Naive thymus-derived CD4-positive, alpha-beta T cell (primary cell): ENCODE measurements at regions of chr6 and their contacts with region 1.

Region 1: GRCh38 chr6:99568103-99568933 is at the start of gene CCNC:
- DNase-seq: peak; percentile 74 to 91 (median 87)
- ATAC-seq: peak; percentile 99
- H3K4me3 ChIP-seq: peak within 1 kb of the TSS; percentile 87
- H3K4me3 Mint-ChIP-seq: peak within 1 kb of the TSS; percentile 92 to 100 (median 98)
- H3K27ac ChIP-seq: peak within 1 kb of the TSS; percentile 84
- H3K27ac Mint-ChIP-seq: peak within 1 kb of the TSS; percentile 89 to 99 (median 94)
- H3K4me1 ChIP-seq: peaks cover 7 to 9% of the 10 kb centered on the region in 2 donors
- H3K4me1 Mint-ChIP-seq: peaks cover 20 to 55% (median 38%) of the 10 kb centered on the region in 7 donors
- H3K27me3 ChIP-seq: no peaks in the 10 kb centered on the region
- H3K27me3 Mint-ChIP-seq: peaks cover 0 to under 1% (median 0%) of the 10 kb centered on the region in 5 donors
- total RNA-seq, gene CCNC: 31.4 to 45.4 (median 37.3) TPM

Region 2: GRCh38 chr6:99425647-99426453 is 142.5 kb before region 1 on chr6:
- CTCF ChIA-PET with region 1: no interaction called
- POLR2A ChIA-PET with region 1: interaction called, 19 read pairs
- intact Hi-C with region 1: loop called (anchors 1 kb)
- DNase-seq: peak in 4 of 9 donors; percentile 54 to 65 (median 58)
- ATAC-seq: peak; percentile 58
- H3K4me3 ChIP-seq: peak overlapping the region; percentile 95
- H3K4me3 Mint-ChIP-seq: peak overlapping the region; percentile 91 to 100 (median 96)
- H3K27ac ChIP-seq: peak overlapping the region; percentile 93
- H3K27ac Mint-ChIP-seq: peak overlapping the region; percentile 96 to 100 (median 99)
- H3K4me1 ChIP-seq: peaks cover 37 to 50% of the 10 kb centered on the region in 2 donors
- H3K4me1 Mint-ChIP-seq: peaks cover 43 to 74% (median 61%) of the 10 kb centered on the region in 7 donors
- H3K27me3 ChIP-seq: no peaks in the 10 kb centered on the region
- H3K27me3 Mint-ChIP-seq: peaks cover 0 to 2% (median 0%) of the 10 kb centered on the region in 5 donors

Region 3: DNA sequence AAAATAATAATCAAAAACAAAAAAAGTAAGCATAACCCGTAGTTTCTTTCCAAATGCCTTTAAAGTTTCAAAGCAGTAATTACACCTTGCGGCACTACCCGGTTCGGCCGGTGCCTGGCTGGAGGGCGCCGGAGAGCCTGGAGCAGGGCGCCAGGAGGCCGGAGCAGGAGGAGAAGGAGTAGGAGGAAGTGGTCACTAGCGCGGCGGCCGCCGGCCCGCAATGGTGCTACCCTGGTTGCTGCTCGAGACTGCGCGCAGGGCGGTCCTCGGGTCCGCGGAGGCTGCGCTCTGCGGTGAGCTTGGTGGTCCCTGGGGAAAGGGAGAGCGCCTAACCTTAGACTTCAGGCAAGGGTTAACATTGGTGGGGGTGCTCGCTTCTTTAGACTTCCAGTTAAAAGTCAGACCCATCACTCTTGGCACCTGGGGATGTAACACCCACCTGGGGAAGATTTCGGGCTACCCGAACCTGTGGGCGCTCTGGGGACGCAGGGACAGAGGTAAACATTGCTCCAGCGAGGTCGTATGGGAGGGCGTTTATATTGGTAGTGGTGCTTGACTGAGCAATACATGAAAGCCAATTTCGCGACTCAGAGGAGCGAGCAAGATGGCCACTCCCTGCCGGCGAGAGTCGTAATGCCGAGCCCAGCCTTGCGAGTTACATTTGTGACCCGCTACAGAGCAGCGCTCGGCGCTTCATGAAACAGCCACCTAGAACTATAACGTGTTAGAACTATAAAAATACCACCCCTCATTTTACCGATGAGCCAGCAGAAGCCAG is 47.3 kb before region 1 on chr6:
- CTCF ChIA-PET with region 1: interaction called, 3 read pairs
- POLR2A ChIA-PET with region 1: interaction called, 7 read pairs
- intact Hi-C with region 1: loop called (anchors 1 kb)
- DNase-seq: peak; percentile 43 to 79 (median 62)
- ATAC-seq: peak; percentile 92
- H3K4me3 ChIP-seq: peak overlapping the region; percentile 73
- H3K4me3 Mint-ChIP-seq: peak overlapping the region; percentile 87 to 99 (median 92)
- H3K27ac ChIP-seq: peak overlapping the region; percentile 60
- H3K27ac Mint-ChIP-seq: peak overlapping the region; percentile 38 to 97 (median 90)
- H3K4me1 ChIP-seq: peaks cover 4 to 11% of the 10 kb centered on the region in 2 donors
- H3K4me1 Mint-ChIP-seq: peaks cover 12 to 26% (median 17%) of the 10 kb centered on the region in 7 donors
- H3K27me3 ChIP-seq: no peaks in the 10 kb centered on the region
- H3K27me3 Mint-ChIP-seq: peaks cover 0 to 15% (median 0%) of the 10 kb centered on the region in 5 donors

Region 4: DNA sequence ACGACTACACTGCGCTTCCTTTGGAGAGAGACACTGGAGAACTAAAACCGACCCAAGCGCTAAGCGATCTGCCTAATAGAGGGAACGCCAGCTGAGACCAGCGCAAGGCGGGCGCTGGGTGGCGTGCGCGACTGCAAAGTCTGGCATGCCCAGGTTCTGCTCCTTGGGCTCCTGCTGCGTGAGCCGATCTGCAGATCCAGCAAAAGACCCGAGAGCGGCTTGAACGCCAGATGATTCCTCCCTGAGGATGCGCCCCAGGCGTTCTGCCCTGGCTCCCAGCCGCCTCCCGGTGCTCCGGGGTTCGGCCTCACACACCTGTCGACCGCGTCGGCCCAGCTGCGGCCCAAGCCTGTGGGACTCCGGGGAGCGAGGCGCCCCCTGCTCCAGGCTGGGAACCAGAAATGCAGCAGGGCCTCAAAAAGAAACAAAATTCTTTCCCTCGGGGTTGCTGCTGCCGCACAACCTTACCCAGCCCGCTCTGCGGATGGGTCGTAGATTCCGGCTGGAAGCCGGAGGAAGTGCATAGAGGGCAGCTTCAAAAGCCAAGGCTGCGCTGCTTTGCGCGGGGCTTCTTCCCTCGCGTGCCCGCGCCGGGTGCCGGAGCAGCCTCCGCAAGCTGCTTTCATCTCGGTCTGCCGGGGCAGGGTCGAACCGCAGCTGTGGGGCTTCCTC is 20.4 kb after region 1 on chr6:
- CTCF ChIA-PET with region 1: no interaction called
- POLR2A ChIA-PET with region 1: interaction called, 7 read pairs
- intact Hi-C with region 1: loop called in 1 of 2 experiments (anchors 1 kb)
- DNase-seq: peak; percentile 33 to 67 (median 59)
- ATAC-seq: peak; percentile 89
- H3K4me3 ChIP-seq: peak overlapping the region; percentile 68
- H3K4me3 Mint-ChIP-seq: peak overlapping the region; percentile 84 to 92 (median 88)
- H3K27ac ChIP-seq: no peak overlapping the region
- H3K27ac Mint-ChIP-seq: peak overlapping the region in 2 of 9 donors; percentile 43 to 45
- H3K4me1 ChIP-seq: peaks cover 8 to 14% of the 10 kb centered on the region in 2 donors
- H3K4me1 Mint-ChIP-seq: peaks cover 16 to 35% (median 26%) of the 10 kb centered on the region in 7 donors
- H3K27me3 ChIP-seq: peaks cover 14 to 19% of the 10 kb centered on the region in 2 donors
- H3K27me3 Mint-ChIP-seq: peaks cover 59 to 84% (median 66%) of the 10 kb centered on the region in 5 donors

Region 5: GRCh38 chr6:99810942-99811620 is 242.8 kb after region 1 on chr6:
- CTCF ChIA-PET with region 1: no interaction called
- POLR2A ChIA-PET with region 1: no interaction called
- intact Hi-C with region 1: no loop called
- DNase-seq: no peak
- ATAC-seq: no peak
- H3K4me3 ChIP-seq: no peak overlapping the region
- H3K4me3 Mint-ChIP-seq: no peak overlapping the region
- H3K27ac ChIP-seq: no peak overlapping the region
- H3K27ac Mint-ChIP-seq: no peak overlapping the region
- H3K4me1 ChIP-seq: no peaks in the 10 kb centered on the region
- H3K4me1 Mint-ChIP-seq: peaks cover 0 to 2% (median 0%) of the 10 kb centered on the region in 7 donors
- H3K27me3 ChIP-seq: no peaks in the 10 kb centered on the region
- H3K27me3 Mint-ChIP-seq: peaks cover 17 to 41% (median 31%) of the 10 kb centered on the region in 5 donors

Region 6: DNA sequence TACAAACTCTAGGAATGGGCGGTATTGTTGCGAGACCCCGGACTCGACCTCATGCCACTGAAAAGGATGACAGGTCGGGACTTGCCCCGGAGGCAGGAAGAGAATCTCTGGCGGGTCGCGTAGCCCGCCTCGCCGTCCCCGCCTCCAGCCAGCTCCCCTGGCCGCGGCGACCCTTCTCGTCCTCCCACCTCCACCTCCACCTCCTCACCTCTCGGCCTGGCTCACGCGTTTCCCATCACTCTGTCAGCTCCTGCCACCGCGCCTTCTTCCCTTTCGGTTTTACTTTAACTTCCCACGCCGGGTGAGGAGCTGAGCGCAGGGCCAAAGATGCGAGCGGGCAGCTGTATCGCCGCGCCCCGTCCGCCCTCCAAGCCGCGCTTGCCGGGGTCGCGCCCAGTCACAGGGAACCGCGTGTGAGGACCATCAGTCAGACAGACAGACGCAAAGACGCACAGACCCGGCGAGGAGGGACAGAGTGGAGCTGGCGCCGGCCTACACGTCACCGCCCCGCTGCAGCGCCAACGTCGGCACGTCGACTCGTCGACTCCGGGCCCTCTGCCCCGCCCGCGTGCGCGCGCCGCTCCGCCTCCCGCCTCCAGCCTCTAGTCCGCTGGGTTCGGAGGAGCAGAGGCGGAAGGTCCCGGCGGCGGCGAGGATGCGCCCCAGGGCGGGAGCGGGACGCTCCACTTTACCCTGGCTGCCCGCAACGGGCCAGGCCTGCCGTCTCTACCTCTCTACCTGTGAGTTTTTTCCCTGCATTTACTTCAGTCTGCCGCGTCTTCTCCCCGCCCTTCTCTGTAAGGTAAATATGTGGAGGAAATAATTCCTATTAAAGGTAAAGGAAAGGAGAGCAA is 1312.8 kb after region 1 on chr6 and contains the start of gene ASCC3:
- CTCF ChIA-PET with region 1: no interaction called
- POLR2A ChIA-PET with region 1: no interaction called
- intact Hi-C with region 1: loop called in 1 of 2 experiments (anchors 10 kb)
- DNase-seq: peak; percentile 80 to 93 (median 86)
- ATAC-seq: peak; percentile 98
- H3K4me3 ChIP-seq: peak within 1 kb of the TSS; percentile 85
- H3K4me3 Mint-ChIP-seq: peak within 1 kb of the TSS; percentile 97 to 100 (median 100)
- H3K27ac ChIP-seq: peak within 1 kb of the TSS; percentile 90
- H3K27ac Mint-ChIP-seq: peak within 1 kb of the TSS; percentile 95 to 100 (median 98)
- H3K4me1 ChIP-seq: peaks cover 24 to 27% of the 10 kb centered on the region in 2 donors
- H3K4me1 Mint-ChIP-seq: peaks cover 19 to 64% (median 50%) of the 10 kb centered on the region in 7 donors
- H3K27me3 ChIP-seq: no peaks in the 10 kb centered on the region
- H3K27me3 Mint-ChIP-seq: peaks cover 0 to 4% (median 3%) of the 10 kb centered on the region in 5 donors
- total RNA-seq, gene ASCC3: 40.7 to 73.8 (median 42.9) TPM